ENCODE measurements at regions of chr7 and their contacts with region 1.

Region 1: GRCh38 chr7:150898475-150899011 is 46.2 kb downstream of the AOC1 start:
- DNase-seq: peak; percentile 62 to 74 (median 65)
- H3K4me3 ChIP-seq: no peak overlapping the region
- H3K4me3 Mint-ChIP-seq: peak overlapping the region in 4 of 8 donors; percentile 1 to 40 (median 20)
- H3K27ac ChIP-seq: no peak overlapping the region
- H3K27ac Mint-ChIP-seq: peak overlapping the region in 2 of 7 donors; percentile 8 to 44
- H3K4me1 ChIP-seq: peaks cover 11% of the 10 kb centered on the region
- H3K4me1 Mint-ChIP-seq: peaks cover 3 to 8% (median 7%) of the 10 kb centered on the region in 4 donors
- H3K27me3 ChIP-seq: peaks cover 13% of the 10 kb centered on the region
- H3K27me3 Mint-ChIP-seq: peaks cover 23 to 38% of the 10 kb centered on the region in 2 donors

Region 2: DNA sequence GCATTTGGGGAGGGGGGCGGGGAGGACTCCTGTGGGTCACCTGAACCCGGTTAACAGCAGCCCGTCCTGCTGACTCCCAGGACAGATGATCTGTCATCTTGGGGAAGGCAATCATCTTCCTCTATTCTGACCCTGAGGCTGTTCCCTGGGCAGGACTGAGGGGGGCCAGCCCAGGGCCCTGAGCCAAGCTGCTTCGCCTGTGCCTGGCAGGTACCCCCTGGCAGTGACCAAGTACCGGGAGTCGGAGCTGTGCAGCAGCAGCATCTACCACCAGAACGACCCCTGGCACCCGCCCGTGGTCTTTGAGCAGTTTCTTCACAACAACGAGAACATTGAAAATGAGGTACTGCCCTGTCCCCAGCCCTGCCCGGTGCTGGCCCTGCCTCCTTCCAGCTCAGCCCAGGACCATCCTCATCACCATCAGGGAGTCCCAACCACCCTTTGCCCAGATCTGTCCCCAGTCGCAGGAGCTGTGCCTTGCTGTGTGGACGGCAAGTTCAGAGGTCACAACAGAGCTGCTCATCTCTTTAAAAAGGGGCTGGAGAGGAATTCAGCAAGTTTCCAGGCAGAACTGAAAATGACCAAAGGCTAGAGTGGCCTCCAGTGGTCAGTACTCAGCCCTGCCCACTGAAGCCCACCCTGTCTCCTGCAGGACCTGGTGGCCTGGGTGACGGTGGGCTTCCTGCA is 38.1 kb before region 1 on chr7:
- CTCF ChIA-PET with region 1: no interaction called
- POLR2A ChIA-PET with region 1: no interaction called
- intact Hi-C with region 1: no loop called
- DNase-seq: no peak
- H3K4me3 ChIP-seq: no peak overlapping the region
- H3K4me3 Mint-ChIP-seq: no peak overlapping the region
- H3K27ac ChIP-seq: no peak overlapping the region
- H3K27ac Mint-ChIP-seq: no peak overlapping the region
- H3K4me1 ChIP-seq: no peaks in the 10 kb centered on the region
- H3K4me1 Mint-ChIP-seq: no peaks in the 10 kb centered on the region
- H3K27me3 ChIP-seq: no peaks in the 10 kb centered on the region
- H3K27me3 Mint-ChIP-seq: peaks cover 15 to 24% of the 10 kb centered on the region in 2 donors

Region 3: GRCh38 chr7:150909200-150909995 is 10.9 kb after region 1 on chr7:
- CTCF ChIA-PET with region 1: interaction called, 33 read pairs
- POLR2A ChIA-PET with region 1: interaction called, 7 read pairs
- intact Hi-C with region 1: no loop called
- DNase-seq: peak; percentile 37 to 69 (median 51)
- H3K4me3 ChIP-seq: no peak overlapping the region
- H3K4me3 Mint-ChIP-seq: peak overlapping the region in 4 of 8 donors; percentile 43 to 80 (median 62)
- H3K27ac ChIP-seq: no peak overlapping the region
- H3K27ac Mint-ChIP-seq: peak overlapping the region in 4 of 7 donors; percentile 18 to 75 (median 56)
- H3K4me1 ChIP-seq: peaks cover 13% of the 10 kb centered on the region
- H3K4me1 Mint-ChIP-seq: peaks cover 13 to 26% (median 14%) of the 10 kb centered on the region in 4 donors
- H3K27me3 ChIP-seq: no peaks in the 10 kb centered on the region
- H3K27me3 Mint-ChIP-seq: peaks cover 0 to 6% of the 10 kb centered on the region in 2 donors

Region 4: DNA sequence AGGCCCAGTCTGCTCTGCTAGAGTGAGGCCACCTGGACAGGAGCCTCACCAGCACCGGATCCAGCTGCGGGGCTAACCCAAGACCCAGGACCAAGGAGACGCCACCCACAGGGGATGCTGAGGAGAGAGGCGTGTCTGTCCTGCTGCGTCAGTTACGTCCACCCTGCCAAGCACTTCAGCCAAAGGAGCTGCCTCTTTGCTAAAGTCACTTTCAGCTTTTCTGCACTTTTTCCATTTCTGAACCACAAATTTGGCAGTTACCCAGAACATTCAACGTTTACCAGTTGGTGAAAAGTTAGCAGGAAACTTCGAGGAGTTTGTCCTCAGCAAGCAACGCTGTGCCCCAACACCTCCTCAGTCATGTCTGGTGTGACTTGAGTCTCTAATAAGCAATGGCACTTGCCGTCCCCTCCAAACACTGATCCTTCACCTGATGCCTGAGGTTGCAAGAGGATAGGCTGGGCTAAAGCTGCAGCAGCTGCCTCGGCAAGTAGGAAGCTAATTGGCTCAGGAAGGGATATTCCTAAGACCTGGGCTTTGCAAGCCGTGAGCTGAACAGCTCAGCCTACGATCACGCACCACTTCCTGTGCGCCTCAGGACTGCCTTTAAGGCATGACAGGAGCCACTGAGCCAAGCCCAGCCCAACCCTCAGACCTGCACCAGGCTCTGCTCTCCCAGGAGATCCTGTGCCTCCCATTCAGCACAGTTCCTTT is 39.5 kb after region 1 on chr7:
- CTCF ChIA-PET with region 1: interaction called, 16 read pairs
- POLR2A ChIA-PET with region 1: no interaction called
- intact Hi-C with region 1: loop called (anchors 1 kb)
- DNase-seq: peak; percentile 29 to 47 (median 34)
- H3K4me3 ChIP-seq: peak overlapping the region in 1 of 2 donors; percentile 33
- H3K4me3 Mint-ChIP-seq: peak overlapping the region; percentile 63 to 85 (median 78)
- H3K27ac ChIP-seq: no peak overlapping the region
- H3K27ac Mint-ChIP-seq: peak overlapping the region; percentile 1 to 88 (median 68)
- H3K4me1 ChIP-seq: peaks cover 43% of the 10 kb centered on the region
- H3K4me1 Mint-ChIP-seq: peaks cover 26 to 60% (median 42%) of the 10 kb centered on the region in 4 donors
- H3K27me3 ChIP-seq: no peaks in the 10 kb centered on the region
- H3K27me3 Mint-ChIP-seq: no peaks in the 10 kb centered on the region

Region 5: GRCh38 chr7:150962553-150963399 is 64.2 kb after region 1 on chr7:
- CTCF ChIA-PET with region 1: interaction called, 14 read pairs
- POLR2A ChIA-PET with region 1: no interaction called
- intact Hi-C with region 1: no loop called
- DNase-seq: peak in 4 of 5 donors; percentile 58 to 63 (median 62)
- H3K4me3 ChIP-seq: no peak overlapping the region
- H3K4me3 Mint-ChIP-seq: no peak overlapping the region
- H3K27ac ChIP-seq: no peak overlapping the region
- H3K27ac Mint-ChIP-seq: no peak overlapping the region
- H3K4me1 ChIP-seq: peaks cover 21% of the 10 kb centered on the region
- H3K4me1 Mint-ChIP-seq: peaks cover 6 to 15% (median 9%) of the 10 kb centered on the region in 4 donors
- H3K27me3 ChIP-seq: no peaks in the 10 kb centered on the region
- H3K27me3 Mint-ChIP-seq: peaks cover 12 to 13% of the 10 kb centered on the region in 2 donors

Region 6: DNA sequence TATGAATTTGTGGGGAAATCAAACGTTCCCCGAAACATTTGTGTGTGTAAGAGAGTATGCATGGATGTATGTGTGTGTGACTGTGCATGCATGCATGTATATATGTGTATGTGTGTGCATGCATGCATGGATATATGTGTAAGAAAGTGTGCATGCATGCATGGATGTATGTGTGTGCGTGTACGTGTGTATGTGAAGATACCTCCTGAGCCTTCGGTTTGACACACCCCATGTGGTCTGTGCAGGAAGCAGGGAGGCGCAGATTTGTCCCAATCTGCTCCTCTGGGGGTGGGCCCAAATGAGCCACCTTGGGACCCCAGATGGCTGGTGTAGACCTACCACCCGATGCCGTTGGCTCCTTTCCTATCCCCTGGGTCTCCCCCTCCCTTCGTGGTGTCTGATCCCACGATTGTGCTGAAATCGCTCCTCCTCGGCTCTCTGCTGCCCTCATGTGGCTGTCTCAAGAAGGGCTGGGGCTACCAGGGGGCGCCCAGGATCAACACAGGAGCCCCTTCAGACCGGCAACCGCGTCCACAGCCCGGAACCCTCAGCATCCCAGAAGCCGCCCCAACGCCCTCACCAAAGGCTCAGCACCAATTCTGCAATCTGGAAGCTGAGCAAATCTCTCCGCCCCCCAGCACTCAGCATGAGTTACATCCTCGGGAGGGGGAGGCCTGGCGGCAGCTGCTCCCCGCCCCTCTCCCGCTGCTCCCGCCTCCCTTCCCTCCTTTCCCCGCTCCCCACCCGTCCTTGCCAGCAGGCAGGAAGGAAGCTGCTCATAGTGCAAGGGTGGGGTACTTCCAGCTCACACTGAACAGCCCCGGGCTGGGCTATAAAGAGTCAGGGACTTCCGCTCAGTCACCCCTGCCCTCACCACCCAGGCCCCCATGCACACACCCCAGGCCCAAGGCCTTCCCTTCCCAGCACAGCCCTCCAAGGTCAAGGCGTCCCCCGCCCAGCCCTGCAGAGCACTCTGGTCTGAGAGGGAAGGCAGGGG is 90.0 kb after region 1 on chr7:
- CTCF ChIA-PET with region 1: interaction called, 42 read pairs
- POLR2A ChIA-PET with region 1: no interaction called
- intact Hi-C with region 1: loop called (anchors 1 kb)
- DNase-seq: peak; percentile 53 to 72 (median 70)
- H3K4me3 ChIP-seq: peak overlapping the region in 1 of 2 donors; percentile 47
- H3K4me3 Mint-ChIP-seq: peak overlapping the region; percentile 55 to 85 (median 75)
- H3K27ac ChIP-seq: no peak overlapping the region
- H3K27ac Mint-ChIP-seq: peak overlapping the region; percentile 23 to 95 (median 83)
- H3K4me1 ChIP-seq: peaks cover 35% of the 10 kb centered on the region
- H3K4me1 Mint-ChIP-seq: peaks cover 18 to 50% (median 31%) of the 10 kb centered on the region in 4 donors
- H3K27me3 ChIP-seq: no peaks in the 10 kb centered on the region
- H3K27me3 Mint-ChIP-seq: no peaks in the 10 kb centered on the region

Region 7: DNA sequence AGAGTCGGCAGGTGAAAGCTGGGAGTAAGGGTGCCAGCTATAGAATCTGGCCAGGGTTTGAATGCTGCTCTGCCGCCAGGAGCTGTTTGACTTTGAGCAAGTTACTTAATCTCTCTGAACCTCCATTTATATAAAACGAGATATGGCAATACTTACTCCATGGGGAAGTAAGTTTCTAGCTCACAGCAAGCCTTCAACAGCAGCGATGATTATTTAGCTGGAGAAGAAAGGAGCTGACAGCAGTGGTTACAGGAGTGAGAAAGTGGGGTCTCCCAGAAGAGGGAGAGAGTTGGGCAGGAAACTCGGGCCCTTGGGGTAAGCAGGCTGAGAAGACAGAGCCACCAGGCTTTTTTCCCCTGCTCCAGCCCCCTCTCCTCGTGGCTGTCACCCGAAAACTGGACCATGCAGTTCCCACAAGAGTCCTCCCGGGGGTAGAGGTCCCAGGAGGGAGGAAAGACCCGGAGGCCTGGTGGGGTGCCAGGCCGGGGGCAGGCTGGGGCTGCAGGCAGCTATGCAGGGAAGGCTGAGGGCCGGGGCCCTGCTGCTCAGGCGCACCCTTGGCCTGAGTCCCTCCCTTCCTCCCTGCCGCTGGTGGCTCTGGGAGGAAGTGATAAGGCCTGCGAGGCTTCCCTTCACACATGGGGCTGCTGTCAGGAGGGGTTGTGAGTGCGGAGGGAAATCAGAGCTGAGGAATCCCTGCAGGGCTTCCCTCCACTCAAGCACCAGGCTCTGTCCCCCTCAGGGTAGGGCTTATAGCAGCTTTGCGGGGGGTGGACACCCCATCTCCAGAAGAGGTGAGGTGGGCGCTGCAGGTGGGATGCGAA is 95.8 kb after region 1 on chr7:
- CTCF ChIA-PET with region 1: interaction called, 28 read pairs
- POLR2A ChIA-PET with region 1: no interaction called
- intact Hi-C with region 1: no loop called
- DNase-seq: peak in 1 of 5 donors; percentile 32
- H3K4me3 ChIP-seq: peak overlapping the region in 1 of 2 donors; percentile 36
- H3K4me3 Mint-ChIP-seq: peak overlapping the region; percentile 26 to 61 (median 46)
- H3K27ac ChIP-seq: peak overlapping the region; percentile 7
- H3K27ac Mint-ChIP-seq: peak overlapping the region in 6 of 7 donors; percentile 29 to 85 (median 69)
- H3K4me1 ChIP-seq: peaks cover 43% of the 10 kb centered on the region
- H3K4me1 Mint-ChIP-seq: peaks cover 17 to 52% (median 38%) of the 10 kb centered on the region in 4 donors
- H3K27me3 ChIP-seq: no peaks in the 10 kb centered on the region
- H3K27me3 Mint-ChIP-seq: no peaks in the 10 kb centered on the region

Region 8: DNA sequence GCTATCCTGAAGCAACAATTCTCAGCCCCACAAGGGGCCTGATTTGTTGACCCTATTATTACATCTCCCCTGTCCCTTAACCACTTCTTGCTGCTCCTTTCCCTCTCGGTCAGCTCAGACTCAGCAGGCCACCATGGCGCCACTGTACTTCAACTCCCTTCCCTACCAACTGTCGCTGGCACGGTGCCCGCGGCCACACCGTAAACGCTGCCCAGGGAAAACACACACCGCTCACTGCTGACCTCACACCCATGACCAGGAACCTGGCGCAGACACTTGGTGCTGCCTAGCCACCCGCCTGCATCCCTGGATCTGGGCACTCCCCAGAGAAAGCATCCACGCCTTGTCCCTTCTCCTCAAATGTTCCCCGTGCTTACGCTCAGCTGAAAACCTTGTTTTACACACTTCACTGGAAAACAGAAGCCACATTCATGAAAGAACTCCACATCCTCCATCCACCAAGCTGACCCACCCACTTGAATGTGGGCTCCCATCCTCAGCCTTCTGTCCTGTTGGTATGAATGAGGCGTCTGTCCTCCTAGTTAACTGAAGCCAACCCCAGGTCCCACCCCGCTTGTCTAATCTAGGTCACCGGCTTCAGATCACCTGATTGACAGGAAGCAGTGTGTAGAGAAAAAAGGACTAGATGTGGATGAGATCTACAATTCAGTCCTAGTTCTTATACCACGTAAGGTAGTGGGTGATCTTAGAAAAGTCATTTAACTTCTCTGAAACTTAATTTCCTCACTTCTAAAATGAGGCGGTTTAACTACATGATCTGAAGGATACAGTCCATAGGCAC is 569.9 kb after region 1 on chr7:
- CTCF ChIA-PET with region 1: no interaction called
- POLR2A ChIA-PET with region 1: no interaction called
- intact Hi-C with region 1: no loop called
- DNase-seq: peak in 3 of 5 donors; percentile 13 to 39 (median 30)
- H3K4me3 ChIP-seq: no peak overlapping the region
- H3K4me3 Mint-ChIP-seq: peak overlapping the region in 3 of 8 donors; percentile 11 to 32 (median 14)
- H3K27ac ChIP-seq: no peak overlapping the region
- H3K27ac Mint-ChIP-seq: peak overlapping the region; percentile 65 to 96 (median 85)
- H3K4me1 ChIP-seq: peaks cover 37% of the 10 kb centered on the region
- H3K4me1 Mint-ChIP-seq: peaks cover 30 to 56% (median 39%) of the 10 kb centered on the region in 4 donors
- H3K27me3 ChIP-seq: no peaks in the 10 kb centered on the region
- H3K27me3 Mint-ChIP-seq: no peaks in the 10 kb centered on the region

Measured in CD4-positive, alpha-beta memory T cell (primary cell).